ENCODE measurements at regions of chr16 and their contacts with region 1.

Region 1: DNA sequence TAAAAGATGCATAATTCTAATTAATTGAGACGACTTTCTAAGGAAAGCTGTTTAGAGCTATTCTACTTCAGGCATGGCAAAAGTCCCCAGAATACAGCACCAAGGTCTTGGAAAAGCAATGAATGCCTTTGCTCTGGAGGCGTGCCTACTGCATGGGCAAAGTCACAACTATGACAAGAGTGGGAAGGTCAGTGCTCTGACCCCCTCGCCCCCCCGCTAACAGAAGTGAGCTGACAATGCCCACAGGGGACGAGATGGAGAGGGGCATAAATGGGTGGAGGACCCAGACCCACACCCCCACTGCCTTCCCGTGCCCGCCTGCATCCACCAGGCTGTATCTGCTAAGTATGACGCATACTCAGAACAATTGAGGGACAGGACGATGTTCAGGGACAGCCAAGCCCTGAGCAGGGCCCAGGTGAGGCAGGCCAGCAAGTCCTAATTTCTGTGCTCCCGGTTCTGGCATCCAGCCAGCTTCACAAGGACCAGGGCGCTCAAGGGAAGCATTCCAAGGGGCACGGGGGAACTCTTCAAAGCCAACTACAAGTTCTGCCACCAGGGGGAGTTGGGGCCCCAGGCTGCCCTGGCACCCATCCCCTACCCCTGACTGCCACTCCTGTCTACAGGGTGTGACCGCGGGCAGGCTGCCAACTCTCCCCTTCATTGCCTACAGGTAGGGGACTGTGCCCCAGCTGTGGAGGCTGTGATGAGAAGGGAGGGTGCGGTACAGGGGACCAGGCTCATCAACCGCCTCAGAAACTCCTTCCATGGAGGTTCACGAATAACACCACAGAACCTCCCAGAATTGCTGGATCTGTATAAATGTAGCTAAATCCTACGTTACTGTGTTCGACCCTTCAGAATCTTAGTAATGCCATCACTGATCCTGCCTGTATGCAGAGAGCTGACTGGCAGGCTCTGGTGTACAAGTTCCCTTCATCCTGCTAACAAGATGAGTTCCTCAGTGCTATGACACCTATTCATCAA is 20.8 kb downstream of the NPRL3 start:
- DNase-seq: no peak
- H3K4me3 ChIP-seq: no peak overlapping the region
- H3K27me3 ChIP-seq: no peaks in the 10 kb centered on the region
- CTCF ChIP-seq: peak; percentile 77

Region 2: DNA sequence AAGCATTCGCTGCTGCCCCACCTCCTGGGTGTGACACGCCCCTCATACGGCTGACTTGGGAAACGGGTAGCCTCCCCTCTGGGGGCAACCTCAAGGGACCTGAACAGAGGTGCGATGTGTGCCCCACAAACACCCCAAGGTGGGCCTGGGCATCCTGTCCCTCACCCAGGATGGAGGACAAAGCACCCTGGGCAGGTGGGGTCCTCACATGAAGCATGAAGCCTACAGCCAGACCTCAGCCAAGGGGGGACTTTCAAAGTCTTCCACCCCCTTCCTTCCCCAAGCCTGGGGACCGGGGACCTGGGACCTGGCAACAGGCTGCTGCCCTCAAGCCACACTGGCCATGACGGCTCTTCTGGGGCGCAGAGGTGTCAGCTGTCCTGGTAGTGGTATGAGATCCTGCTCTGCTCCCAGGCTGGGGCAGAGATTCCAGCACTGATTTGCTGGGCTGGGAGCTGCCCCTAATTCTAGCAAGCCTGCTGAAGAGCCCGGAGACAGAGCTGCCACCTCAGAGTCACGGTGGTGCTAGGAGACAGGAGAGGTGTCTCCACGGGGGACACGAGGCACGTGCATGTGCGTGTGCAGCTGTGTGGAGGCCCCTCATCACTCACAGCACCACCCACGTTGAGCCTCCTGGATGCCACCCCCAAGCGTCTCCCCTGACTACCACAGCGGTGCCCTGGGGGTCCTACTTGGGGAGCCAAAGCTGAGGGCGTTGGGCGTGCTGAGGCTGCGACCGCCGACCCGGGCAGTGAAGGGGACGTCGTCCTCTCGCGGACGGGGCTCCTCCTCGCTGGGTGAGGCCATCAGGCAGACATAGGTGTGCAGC is 28.4 kb before region 1 on chr16:
- CTCF ChIA-PET with region 1: no interaction called
- POLR2A ChIA-PET with region 1: no interaction called
- DNase-seq: no peak
- H3K4me3 ChIP-seq: no peak overlapping the region
- H3K27me3 ChIP-seq: no peaks in the 10 kb centered on the region
- CTCF ChIP-seq: no peak

Region 3: DNA sequence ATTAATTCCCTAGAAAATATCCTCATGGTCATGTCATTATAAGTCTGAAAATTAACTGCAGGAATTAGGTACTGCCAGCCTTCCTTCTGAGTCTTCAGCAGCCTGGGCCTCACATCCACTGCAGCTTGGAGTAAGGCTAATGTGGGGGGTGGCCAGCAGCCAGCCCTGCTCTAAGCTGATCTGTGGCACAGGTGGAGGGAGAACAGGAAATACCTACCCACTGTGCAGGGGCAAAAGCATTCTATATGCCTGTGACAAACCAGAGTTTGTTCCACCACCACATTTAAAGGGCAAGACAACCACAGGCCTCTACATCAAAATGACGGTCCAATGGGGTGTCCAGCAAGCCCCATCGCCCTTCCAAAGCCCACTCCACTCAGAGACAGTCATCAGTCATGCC is 11.4 kb after region 1 on chr16:
- CTCF ChIA-PET with region 1: interaction called, 14 read pairs
- POLR2A ChIA-PET with region 1: no interaction called
- DNase-seq: no peak
- H3K4me3 ChIP-seq: no peak overlapping the region
- H3K27me3 ChIP-seq: no peaks in the 10 kb centered on the region
- CTCF ChIP-seq: no peak

Region 4: GRCh38 chr16:180938-181667 is 63.4 kb after region 1 on chr16:
- CTCF ChIA-PET with region 1: interaction called, 15 read pairs
- POLR2A ChIA-PET with region 1: interaction called, 11 read pairs
- DNase-seq: no peak
- H3K4me3 ChIP-seq: peak overlapping the region; percentile 29; the same call in 1 of the 2 replicates
- H3K27me3 ChIP-seq: peaks cover 10% of the 10 kb centered on the region
- CTCF ChIP-seq: peak; percentile 89

Region 5: DNA sequence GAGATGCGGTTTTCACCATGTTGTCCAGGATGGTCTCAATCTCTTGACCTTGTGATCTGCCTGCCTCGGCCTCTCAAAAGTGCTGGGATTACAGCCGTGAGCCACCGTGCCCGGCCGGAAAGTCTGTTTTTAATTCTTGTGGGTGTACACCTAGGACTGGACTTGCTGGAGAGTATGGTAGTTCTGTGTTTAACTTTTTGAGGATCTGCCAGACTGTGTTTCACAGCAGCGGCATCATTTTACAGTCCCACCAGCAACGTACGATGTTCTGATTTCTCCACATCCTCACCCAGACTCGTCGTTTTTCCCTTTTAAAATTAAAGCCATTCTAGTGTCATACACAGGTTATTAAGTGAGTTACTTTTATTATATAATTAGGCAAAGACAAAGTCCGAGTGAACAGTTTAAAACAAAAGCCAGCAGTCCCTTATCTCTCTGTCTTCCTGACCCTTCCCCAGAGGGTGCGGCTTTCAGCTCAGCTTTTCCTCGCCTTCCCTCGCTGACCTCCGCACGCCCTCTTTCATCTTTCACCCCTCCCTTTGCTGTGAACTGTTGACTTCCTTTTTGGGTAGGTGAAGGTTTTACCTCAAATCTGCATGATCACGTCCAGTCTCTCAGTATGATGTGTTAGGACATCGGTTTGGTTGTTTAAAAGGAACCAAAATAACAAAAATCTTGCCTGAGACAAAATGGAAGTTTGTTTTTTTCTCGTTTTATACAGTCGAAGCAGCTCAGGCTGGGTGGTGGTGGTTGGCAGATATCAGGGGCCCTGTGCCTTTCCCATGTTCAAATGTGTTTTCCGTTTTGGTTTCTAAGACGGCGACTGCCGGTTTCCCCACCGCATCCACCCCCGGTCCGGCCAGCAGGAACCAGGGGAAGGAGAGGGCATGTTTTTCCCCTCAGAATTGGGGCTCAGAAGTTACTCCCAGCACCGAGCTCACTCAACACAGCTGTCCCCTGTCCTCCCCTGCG is 135.0 kb after region 1 on chr16:
- CTCF ChIA-PET with region 1: no interaction called
- POLR2A ChIA-PET with region 1: no interaction called
- DNase-seq: no peak
- H3K4me3 ChIP-seq: no peak overlapping the region
- H3K27me3 ChIP-seq: no peaks in the 10 kb centered on the region
- CTCF ChIP-seq: no peak

Region 6: DNA sequence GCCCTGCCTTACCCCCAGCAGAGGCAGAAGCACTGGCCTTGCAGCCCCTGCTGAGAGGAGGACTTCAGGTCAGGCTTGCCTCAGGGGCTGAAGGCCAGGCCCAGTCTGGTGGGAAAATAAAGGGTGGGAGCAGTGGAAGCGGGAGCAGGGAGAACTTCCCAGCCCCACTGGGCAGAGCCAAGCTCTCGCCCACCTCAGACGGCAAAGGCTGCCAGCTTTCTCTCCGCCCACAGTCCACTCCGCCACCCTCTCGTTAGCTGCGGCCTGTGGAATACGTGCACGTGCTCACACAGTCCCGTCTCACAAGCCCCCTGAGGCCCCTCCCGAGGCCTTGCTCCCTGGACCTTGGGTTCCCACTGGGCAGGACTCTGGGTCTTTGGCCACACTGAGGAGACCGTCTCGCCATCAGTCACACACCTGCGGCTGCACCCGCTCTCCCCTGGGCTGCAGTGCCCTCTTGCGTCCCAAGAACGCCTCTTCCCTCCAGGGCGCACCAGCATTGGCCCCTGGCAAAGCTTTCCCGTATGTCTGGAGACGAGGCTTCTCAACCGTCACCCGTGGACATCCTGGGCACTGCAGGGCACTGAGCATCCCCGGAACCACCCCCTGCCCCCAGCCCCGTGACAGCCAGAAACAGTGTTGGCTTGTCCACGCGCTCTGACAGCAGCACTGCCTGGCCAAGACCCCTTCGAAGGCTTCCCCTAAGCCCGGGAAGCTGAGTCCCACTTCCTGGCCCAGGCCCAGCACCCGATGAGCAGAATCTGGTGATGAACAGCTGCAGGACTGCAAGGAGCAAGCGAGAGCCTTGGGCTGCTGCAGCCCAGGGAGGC is 244.4 kb after region 1 on chr16:
- CTCF ChIA-PET with region 1: interaction called, 16 read pairs
- POLR2A ChIA-PET with region 1: no interaction called
- DNase-seq: no peak
- H3K4me3 ChIP-seq: no peak overlapping the region
- H3K27me3 ChIP-seq: no peaks in the 10 kb centered on the region
- CTCF ChIP-seq: peak; percentile 90

Measured in BJ (cell line).